ENCODE measurements at regions of chr16 and their contacts with region 1.

Region 1: GRCh38 chr16:1492923-1493745 is at the start of gene TELO2:
- DNase-seq: peak; percentile 85
- H3K4me3 Mint-ChIP-seq: peak within 1 kb of the TSS; percentile 90
- H3K27ac Mint-ChIP-seq: peak within 1 kb of the TSS; percentile 94
- H3K4me1 Mint-ChIP-seq: peaks cover 16% of the 10 kb centered on the region
- H3K27me3 Mint-ChIP-seq: no peaks in the 10 kb centered on the region
- total RNA-seq, gene TELO2: 68.1 to 76.1 TPM

Region 2: DNA sequence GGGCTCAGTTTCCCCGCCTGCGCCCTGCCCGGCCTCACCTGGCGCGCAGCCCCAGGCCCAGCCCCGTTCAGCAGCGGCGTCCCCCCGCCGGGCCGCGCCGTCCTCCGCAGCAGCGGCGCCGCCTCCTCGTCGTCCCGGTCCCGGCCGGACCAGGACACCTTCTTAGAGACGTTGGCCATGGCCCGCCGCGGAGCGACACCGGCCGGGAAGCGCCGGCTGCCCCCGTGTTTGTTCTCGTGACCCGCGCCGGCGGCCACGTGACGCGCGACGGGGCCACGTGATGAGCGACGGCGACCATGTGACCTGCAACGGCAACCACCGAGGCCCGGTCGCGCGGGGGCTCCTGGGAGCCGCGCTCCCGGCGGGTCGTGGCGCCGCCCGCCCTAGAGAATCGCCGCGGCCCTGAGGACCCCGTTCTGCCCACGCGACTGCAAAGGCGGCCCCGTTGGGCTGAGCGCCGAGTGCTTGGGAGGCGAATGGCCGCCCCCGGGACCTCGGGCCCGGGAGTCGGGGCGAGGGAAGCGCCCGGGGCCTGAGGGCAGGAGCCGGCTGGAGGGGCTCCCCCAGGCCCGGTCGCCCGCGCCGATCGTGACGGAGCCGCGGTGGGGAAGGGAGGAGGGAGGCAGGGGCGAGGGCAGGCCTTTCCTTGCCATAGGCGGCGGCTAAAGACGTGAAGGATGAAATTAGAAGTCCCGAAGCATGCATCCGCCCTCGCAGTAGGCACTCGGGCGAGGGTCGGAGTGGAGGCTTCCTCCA is 18.2 kb before region 1 on chr16 and contains the start of gene CLCN7:
- CTCF ChIA-PET with region 1: no interaction called
- intact Hi-C with region 1: loop called (anchors 1 kb)
- DNase-seq: peak; percentile 90
- H3K4me3 Mint-ChIP-seq: peak within 1 kb of the TSS; percentile 85
- H3K27ac Mint-ChIP-seq: peak within 1 kb of the TSS; percentile 82
- H3K4me1 Mint-ChIP-seq: peaks cover 36% of the 10 kb centered on the region
- H3K27me3 Mint-ChIP-seq: no peaks in the 10 kb centered on the region
- total RNA-seq, gene CLCN7: 31.7 to 34.5 TPM

Region 3: DNA sequence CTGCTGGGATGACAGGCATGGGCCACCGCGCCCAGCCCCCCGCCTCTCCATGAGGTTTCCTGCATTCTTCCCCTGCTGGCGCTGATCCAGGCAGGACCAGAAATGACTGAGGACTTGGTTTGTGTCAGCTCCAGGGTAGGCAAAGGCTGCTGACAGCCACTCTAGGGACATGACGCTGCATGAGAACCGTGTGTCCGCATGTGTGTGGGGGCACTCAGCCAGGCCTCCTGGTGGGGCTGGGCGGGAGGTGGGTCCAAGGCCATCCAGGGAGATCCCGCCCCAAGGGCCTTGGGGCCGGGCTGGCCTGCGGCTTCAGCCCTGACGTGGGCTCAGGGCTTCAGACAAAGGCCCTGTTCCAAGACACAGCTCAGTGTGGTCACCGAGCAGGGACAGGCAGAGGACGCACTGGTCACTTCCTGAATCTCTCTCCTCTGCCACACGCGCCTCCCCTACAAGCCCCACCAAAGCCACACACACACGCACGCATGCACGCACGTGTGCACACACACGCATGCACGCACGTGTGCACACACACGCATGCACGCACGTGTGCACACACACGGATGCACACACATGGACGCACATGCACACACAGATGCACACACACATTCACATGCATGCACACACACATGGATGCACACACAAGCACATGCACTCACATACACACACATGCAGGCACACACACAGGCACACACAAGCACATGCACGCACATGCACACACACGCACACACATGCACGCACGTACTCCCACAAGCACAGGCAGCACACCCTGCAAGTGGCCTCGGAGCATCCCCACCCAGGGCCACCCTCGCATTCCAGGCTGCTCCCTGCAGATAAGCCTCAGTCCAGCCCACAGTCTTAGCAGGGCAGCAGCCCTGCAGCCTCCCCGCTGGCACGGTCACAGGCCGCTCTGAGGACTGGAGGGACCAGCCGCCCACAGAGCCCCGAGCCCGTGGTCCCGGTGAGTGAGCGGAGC is 35.0 kb after region 1 on chr16:
- CTCF ChIA-PET with region 1: no interaction called
- intact Hi-C with region 1: no loop called
- DNase-seq: no peak
- H3K4me3 Mint-ChIP-seq: no peak overlapping the region
- H3K27ac Mint-ChIP-seq: no peak overlapping the region
- H3K4me1 Mint-ChIP-seq: peaks cover 39% of the 10 kb centered on the region
- H3K27me3 Mint-ChIP-seq: no peaks in the 10 kb centered on the region

Region 4: GRCh38 chr16:1543085-1543896 is 50.2 kb after region 1 on chr16:
- CTCF ChIA-PET with region 1: no interaction called
- intact Hi-C with region 1: loop called (anchors 2 kb)
- DNase-seq: peak; percentile 84
- H3K4me3 Mint-ChIP-seq: peak overlapping the region; percentile 60
- H3K27ac Mint-ChIP-seq: peak overlapping the region; percentile 89
- H3K4me1 Mint-ChIP-seq: peaks cover 79% of the 10 kb centered on the region
- H3K27me3 Mint-ChIP-seq: no peaks in the 10 kb centered on the region

Region 5: GRCh38 chr16:1564325-1564724 is 71.2 kb after region 1 on chr16:
- CTCF ChIA-PET with region 1: no interaction called
- intact Hi-C with region 1: no loop called
- DNase-seq: no peak
- H3K4me3 Mint-ChIP-seq: no peak overlapping the region
- H3K27ac Mint-ChIP-seq: no peak overlapping the region
- H3K4me1 Mint-ChIP-seq: peaks cover 32% of the 10 kb centered on the region
- H3K27me3 Mint-ChIP-seq: no peaks in the 10 kb centered on the region